ENCODE measurements at regions of chr22 and their contacts with region 1.

Region 1: GRCh38 chr22:33920927-33921524 is 750 bp upstream of the LARGE1 start:
- DNase-seq: peak; percentile 98 to 100 (median 99)
- H3K4me3 ChIP-seq: peak overlapping the region; percentile 92
- H3K27ac ChIP-seq: peak overlapping the region; percentile 80 to 87
- H3K4me1 ChIP-seq: peaks cover 5% of the 10 kb centered on the region
- H3K27me3 ChIP-seq: no peaks in the 10 kb centered on the region
- CTCF ChIP-seq: no peak
- EP300 ChIP-seq: no peak
- POLR2A ChIP-seq: peak; percentile 37

Region 2: GRCh38 chr22:33302049-33302545 is 618.9 kb before region 1 on chr22:
- intact Hi-C with region 1: loop called in 1 of 4 experiments (anchors 5 kb)
- DNase-seq: peak; percentile 81 to 91 (median 87)
- H3K4me3 ChIP-seq: no peak overlapping the region
- H3K27ac ChIP-seq: no peak overlapping the region
- H3K4me1 ChIP-seq: peaks cover 6% of the 10 kb centered on the region
- H3K27me3 ChIP-seq: no peaks in the 10 kb centered on the region
- CTCF ChIP-seq: peak; percentile 84 to 92 (median 89)
- EP300 ChIP-seq: no peak
- POLR2A ChIP-seq: no peak

Region 3: DNA sequence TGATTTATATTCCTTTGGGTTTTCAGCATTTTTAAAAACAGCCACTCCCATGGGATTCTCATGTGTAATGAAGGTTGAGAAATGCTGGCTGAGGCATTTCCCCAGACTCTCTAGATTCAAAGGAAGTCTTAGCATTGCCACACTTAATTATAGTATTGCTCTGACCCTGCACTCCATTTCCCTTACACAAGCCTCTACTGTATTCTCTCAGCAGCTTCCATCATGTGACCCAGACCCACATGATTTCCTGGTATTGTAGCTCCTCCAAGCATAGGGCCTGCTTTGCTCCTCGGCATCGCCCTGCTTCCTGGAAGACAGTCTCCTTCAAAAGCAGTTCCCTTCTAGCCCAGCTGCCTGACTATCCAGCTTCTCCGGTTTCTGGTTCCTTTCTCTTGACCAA is 262.3 kb before region 1 on chr22:
- intact Hi-C with region 1: loop called in 1 of 4 experiments (anchors 10 kb)
- DNase-seq: peak in 3 of 5 donors; percentile 29 to 64 (median 37)
- H3K4me3 ChIP-seq: no peak overlapping the region
- H3K27ac ChIP-seq: peak overlapping the region in 1 of 2 donors; percentile 46
- H3K4me1 ChIP-seq: peaks cover 21% of the 10 kb centered on the region
- H3K27me3 ChIP-seq: no peaks in the 10 kb centered on the region
- CTCF ChIP-seq: no peak
- EP300 ChIP-seq: peak; percentile 30
- POLR2A ChIP-seq: no peak

Region 4: GRCh38 chr22:33796494-33796893 is 124.5 kb before region 1 on chr22:
- intact Hi-C with region 1: loop called in 1 of 4 experiments (anchors 10 kb)
- DNase-seq: no peak
- H3K4me3 ChIP-seq: no peak overlapping the region
- H3K27ac ChIP-seq: no peak overlapping the region
- H3K4me1 ChIP-seq: peaks cover 4% of the 10 kb centered on the region
- H3K27me3 ChIP-seq: no peaks in the 10 kb centered on the region
- CTCF ChIP-seq: no peak
- EP300 ChIP-seq: no peak
- POLR2A ChIP-seq: no peak

Region 5: GRCh38 chr22:34111210-34111824 is 190.3 kb after region 1 on chr22:
- intact Hi-C with region 1: loop called in 3 of 4 experiments (anchors 10 kb)
- DNase-seq: peak; percentile 13 to 39 (median 27)
- H3K4me3 ChIP-seq: no peak overlapping the region
- H3K27ac ChIP-seq: no peak overlapping the region
- H3K4me1 ChIP-seq: no peaks in the 10 kb centered on the region
- H3K27me3 ChIP-seq: no peaks in the 10 kb centered on the region
- CTCF ChIP-seq: peak in 2 of 3 donors; percentile 22 to 34
- EP300 ChIP-seq: no peak
- POLR2A ChIP-seq: no peak